PC-3 (cell line): ENCODE measurements at regions of chr11 and their contacts with region 1.

Region 1: DNA sequence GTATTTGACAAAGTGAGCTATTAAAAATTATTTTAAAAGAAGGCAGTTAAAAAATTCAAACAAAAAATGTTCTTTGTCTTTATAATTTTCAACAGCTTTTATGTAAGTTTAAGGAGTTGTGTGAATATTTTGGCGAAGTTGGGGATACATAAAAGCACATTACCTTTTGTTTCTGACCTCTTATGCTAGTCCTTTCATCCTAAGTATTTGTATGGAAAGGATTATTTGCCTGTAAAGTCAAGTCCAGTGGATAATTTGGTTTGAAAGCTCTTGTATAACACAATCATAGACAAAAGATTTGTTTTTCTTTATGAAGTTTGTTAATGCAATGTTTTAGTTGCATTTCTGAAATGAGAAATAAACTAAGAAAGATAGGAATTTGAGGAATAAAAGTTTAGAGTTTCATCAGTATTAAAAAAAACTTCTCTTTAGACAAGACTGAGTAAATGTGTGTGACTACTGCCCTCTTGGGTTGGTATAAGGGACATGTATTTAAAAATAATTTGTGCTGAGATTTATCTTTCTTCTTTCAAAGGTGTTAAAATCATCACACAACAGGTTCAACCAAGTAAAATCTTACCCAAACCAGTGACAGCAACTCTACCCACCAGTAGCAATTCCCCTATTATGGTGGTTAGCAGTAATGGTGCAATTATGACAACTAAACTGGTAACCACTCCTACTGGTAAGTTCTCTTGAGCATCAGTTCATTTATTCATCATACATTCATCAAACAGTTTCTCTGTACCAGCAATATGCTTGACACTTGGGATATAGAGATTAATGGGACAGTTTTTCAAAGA is 68.2 kb downstream of the EMSY start:
- DNase-seq: peak; percentile 42
- ATAC-seq: peak; percentile 18; the same call in 1 of the 2 replicates
- H3K4me3 ChIP-seq: no peak overlapping the region
- H3K27ac ChIP-seq: no peak overlapping the region
- H3K4me1 ChIP-seq: no peaks in the 10 kb centered on the region
- H3K27me3 ChIP-seq: no peaks in the 10 kb centered on the region
- CTCF ChIP-seq: peak; percentile 76

Region 2: GRCh38 chr11:76207642-76208401 is 305.2 kb before region 1 on chr11:
- CTCF ChIA-PET with region 1: interaction called, 5 read pairs
- POLR2A ChIA-PET with region 1: no interaction called
- intact Hi-C with region 1: loop called (anchors 1 kb)
- DNase-seq: peak; percentile 93
- ATAC-seq: peak; percentile 56
- H3K4me3 ChIP-seq: peak overlapping the region; percentile 67
- H3K27ac ChIP-seq: no peak overlapping the region
- H3K4me1 ChIP-seq: peaks cover 32% of the 10 kb centered on the region
- H3K27me3 ChIP-seq: peaks cover 49% of the 10 kb centered on the region
- CTCF ChIP-seq: peak; percentile 94

Region 3: DNA sequence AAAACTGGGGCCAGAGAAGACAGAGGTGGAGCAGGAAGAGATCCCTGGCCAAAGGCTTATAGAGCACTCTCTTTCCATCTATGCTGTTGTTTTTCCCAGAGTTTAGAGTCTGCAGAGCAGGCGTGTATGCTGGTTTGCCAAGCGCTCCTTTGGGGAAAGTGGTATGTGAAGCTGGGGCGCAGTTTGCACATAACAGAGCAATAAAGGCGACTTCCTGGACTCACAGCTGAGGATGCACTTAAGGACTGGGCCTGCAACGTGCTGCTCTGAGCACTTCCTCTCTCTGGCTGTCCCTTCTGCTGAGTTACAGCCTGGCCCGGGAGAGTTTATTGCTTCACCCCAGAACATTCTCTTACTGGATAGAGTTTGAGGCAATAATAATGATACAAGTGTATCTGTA is 173.8 kb before region 1 on chr11:
- CTCF ChIA-PET with region 1: no interaction called
- POLR2A ChIA-PET with region 1: no interaction called
- intact Hi-C with region 1: no loop called
- DNase-seq: no peak
- ATAC-seq: no peak; the same call in 1 of the 2 replicates
- H3K4me3 ChIP-seq: no peak overlapping the region
- H3K27ac ChIP-seq: no peak overlapping the region
- H3K4me1 ChIP-seq: no peaks in the 10 kb centered on the region
- H3K27me3 ChIP-seq: no peaks in the 10 kb centered on the region
- CTCF ChIP-seq: no peak

Region 4: GRCh38 chr11:76371170-76371569 is 141.9 kb before region 1 on chr11:
- CTCF ChIA-PET with region 1: no interaction called
- POLR2A ChIA-PET with region 1: no interaction called
- intact Hi-C with region 1: loop called (anchors 5 kb)
- DNase-seq: peak; percentile 96
- ATAC-seq: peak; percentile 99
- H3K4me3 ChIP-seq: no peak overlapping the region
- H3K27ac ChIP-seq: peak overlapping the region; percentile 48
- H3K4me1 ChIP-seq: peaks cover 16% of the 10 kb centered on the region
- H3K27me3 ChIP-seq: no peaks in the 10 kb centered on the region
- CTCF ChIP-seq: no peak

Region 5: DNA sequence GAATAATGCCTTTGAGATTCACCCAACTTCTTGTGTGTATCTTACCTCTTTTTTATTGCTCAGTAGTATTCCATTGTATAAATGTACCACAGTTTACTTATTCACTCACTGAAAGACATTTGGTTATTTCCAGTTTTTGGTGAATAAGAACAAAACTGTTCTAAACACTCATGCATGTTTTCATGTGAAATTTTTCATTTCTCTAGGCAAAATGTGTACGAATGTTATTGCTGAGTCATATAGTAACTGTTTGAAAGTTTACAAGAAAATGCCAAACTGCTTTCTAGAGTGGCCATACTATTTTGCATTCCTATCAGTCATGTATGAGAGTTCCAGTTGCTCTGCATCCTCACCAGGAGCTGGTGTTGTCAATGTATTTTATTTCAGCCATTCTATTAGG is 77.0 kb before region 1 on chr11:
- CTCF ChIA-PET with region 1: no interaction called
- POLR2A ChIA-PET with region 1: no interaction called
- intact Hi-C with region 1: no loop called
- DNase-seq: no peak
- ATAC-seq: no peak
- H3K4me3 ChIP-seq: no peak overlapping the region
- H3K27ac ChIP-seq: no peak overlapping the region
- H3K4me1 ChIP-seq: no peaks in the 10 kb centered on the region
- H3K27me3 ChIP-seq: no peaks in the 10 kb centered on the region
- CTCF ChIP-seq: no peak

Region 6: DNA sequence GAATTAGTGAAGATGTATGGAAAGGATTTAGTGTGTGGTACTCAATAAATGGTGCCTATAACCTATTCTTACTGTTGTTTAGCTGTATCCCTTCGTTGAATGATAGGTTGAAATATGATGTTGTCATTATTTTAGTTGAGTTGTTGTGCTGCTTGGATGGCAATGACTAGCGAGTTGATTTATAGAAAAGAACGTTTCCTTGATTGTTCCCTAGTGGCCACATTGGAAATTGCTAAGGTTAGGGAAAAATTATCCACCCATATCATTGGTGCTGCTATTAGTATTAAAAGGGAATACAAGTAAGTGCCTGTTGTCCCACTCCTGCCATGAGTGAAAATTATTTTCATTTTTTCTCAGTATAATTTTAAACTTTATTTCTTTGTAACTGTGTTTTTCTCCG is 53.8 kb before region 1 on chr11:
- CTCF ChIA-PET with region 1: no interaction called
- POLR2A ChIA-PET with region 1: no interaction called
- intact Hi-C with region 1: loop called (anchors 5 kb)
- DNase-seq: peak; percentile 46
- ATAC-seq: no peak
- H3K4me3 ChIP-seq: no peak overlapping the region
- H3K27ac ChIP-seq: no peak overlapping the region
- H3K4me1 ChIP-seq: peaks cover 17% of the 10 kb centered on the region
- H3K27me3 ChIP-seq: no peaks in the 10 kb centered on the region
- CTCF ChIP-seq: peak; percentile 74

Region 7: DNA sequence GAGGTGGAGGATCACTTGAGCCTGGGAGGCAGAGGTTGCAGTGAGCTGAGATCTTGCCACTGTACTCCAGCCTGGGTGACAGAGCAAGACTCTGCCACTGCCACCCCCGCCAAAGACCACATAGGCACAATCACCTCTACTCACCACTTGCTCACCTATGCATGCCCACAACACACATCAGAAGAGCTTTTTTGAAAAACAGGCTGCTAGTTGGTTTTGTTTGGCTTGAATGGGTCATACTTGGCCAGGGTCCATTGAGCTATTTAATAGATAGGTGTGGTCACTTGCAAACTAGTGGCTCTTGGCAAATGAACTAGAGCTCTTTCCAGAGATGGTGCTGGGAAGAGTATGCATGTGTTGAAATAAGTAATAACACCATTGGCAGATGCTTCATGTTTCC is 11.9 kb after region 1 on chr11:
- CTCF ChIA-PET with region 1: no interaction called
- POLR2A ChIA-PET with region 1: interaction called, 19 read pairs
- intact Hi-C with region 1: loop called (anchors 1 kb)
- DNase-seq: peak; percentile 98
- ATAC-seq: peak; percentile 93
- H3K4me3 ChIP-seq: peak overlapping the region; percentile 35; the same call in 1 of the 2 replicates
- H3K27ac ChIP-seq: peak overlapping the region; percentile 95
- H3K4me1 ChIP-seq: peaks cover 42% of the 10 kb centered on the region
- H3K27me3 ChIP-seq: no peaks in the 10 kb centered on the region
- CTCF ChIP-seq: no peak